Endothelial cell of umbilical vein (primary cell): ENCODE measurements at regions of chr5 and their contacts with region 1.

Region 1: DNA sequence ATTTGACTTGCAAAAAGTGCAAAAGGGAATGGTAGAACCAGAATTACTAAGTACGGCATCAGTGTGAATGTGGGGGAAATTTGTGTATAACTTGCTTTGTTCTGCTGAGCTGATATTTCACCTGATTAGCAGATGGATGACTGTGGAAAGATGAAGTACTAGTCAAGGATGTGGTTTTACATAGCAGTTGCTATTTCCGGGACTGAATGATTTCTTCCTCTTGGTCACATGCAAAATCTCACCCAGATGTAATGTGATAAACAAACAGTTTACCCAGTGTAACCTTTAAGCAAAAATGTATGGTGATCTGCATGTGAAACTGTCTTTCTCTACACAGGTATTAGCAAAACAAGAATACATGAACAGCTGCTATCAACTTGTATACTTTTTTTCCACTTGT is 46.1 kb downstream of the DCP2 start:
- DNase-seq: peak; percentile 59
- H3K4me3 ChIP-seq: no peak overlapping the region
- H3K27ac ChIP-seq: peak overlapping the region; percentile 95
- H3K4me1 ChIP-seq: peaks cover 48% of the 10 kb centered on the region
- H3K27me3 ChIP-seq: no peaks in the 10 kb centered on the region
- CTCF ChIP-seq: no peak
- POLR2A ChIP-seq: peak; percentile 56

Region 2: GRCh38 chr5:112976432-112977309 is 46.0 kb before region 1 on chr5 and contains the start of gene DCP2:
- CTCF ChIA-PET with region 1: no interaction called
- POLR2A ChIA-PET with region 1: no interaction called
- dilution Hi-C with region 1: no loop called
- intact Hi-C with region 1: loop called (anchors 1 kb)
- DNase-seq: peak; percentile 99
- H3K4me3 ChIP-seq: peak within 1 kb of the TSS; percentile 98 to 99 (median 99)
- H3K27ac ChIP-seq: peak within 1 kb of the TSS; percentile 48
- H3K4me1 ChIP-seq: peaks cover 21% of the 10 kb centered on the region
- H3K27me3 ChIP-seq: no peaks in the 10 kb centered on the region
- CTCF ChIP-seq: no peak
- POLR2A ChIP-seq: peak; percentile 97
- total RNA-seq, gene DCP2: 49.1 and 60.0 TPM in 2 replicates

Region 3: DNA sequence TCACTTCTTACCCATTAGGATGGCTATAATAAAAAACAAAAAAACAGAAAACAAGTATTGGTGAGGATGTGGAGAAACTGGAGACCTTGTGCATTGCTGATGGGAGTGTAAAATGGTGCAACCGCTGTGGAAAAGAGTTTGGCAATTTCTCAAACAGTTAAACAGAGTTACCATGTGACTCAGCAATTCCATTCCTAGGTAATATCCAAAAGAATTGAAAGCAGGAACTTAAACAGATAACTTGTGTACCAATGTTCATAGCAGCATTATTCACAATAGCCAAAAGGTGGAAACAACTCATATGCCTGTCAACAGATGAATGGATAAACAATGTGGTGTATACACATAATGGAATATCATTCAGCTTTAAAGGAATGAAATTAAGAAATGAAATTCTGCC is 17.2 kb before region 1 on chr5:
- CTCF ChIA-PET with region 1: interaction called, 4 read pairs
- POLR2A ChIA-PET with region 1: no interaction called
- dilution Hi-C with region 1: no loop called
- intact Hi-C with region 1: loop called (anchors 2 kb)
- DNase-seq: no peak
- H3K4me3 ChIP-seq: no peak overlapping the region
- H3K27ac ChIP-seq: no peak overlapping the region
- H3K4me1 ChIP-seq: peaks cover 4% of the 10 kb centered on the region
- H3K27me3 ChIP-seq: no peaks in the 10 kb centered on the region
- CTCF ChIP-seq: no peak
- POLR2A ChIP-seq: no peak

Region 4: DNA sequence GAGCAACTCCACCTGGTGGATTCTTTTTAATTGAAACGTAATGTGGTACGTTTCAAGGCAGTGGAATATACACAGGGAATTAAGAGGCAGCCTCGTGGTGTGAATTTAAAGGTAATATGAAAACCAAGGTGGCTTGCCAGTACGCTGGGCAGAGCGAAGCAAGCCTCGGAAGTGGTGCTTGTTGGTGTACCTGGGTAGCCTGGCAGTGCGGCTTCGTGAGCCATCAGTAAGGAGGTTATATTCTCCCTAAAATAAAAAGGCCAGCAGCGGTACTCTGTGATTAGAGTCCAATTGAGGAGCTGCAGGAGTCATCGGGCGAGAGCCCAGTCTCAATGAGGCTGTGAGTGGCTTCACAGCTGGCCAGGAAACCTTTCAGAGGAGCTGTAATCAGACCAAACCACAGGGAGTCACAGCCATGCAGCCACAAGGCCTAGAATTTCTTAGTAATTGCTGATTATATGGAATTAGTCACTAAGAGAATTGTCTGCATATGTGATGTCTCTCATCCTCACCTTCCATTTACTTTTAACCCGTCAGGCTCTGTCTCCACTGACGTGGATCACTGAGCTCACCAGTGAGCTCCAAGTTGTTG is 11.6 kb after region 1 on chr5:
- CTCF ChIA-PET with region 1: interaction called, 5 read pairs
- POLR2A ChIA-PET with region 1: no interaction called
- dilution Hi-C with region 1: no loop called
- intact Hi-C with region 1: loop called (anchors 1 kb)
- DNase-seq: no peak
- H3K4me3 ChIP-seq: no peak overlapping the region
- H3K27ac ChIP-seq: no peak overlapping the region
- H3K4me1 ChIP-seq: no peaks in the 10 kb centered on the region
- H3K27me3 ChIP-seq: no peaks in the 10 kb centered on the region
- CTCF ChIP-seq: no peak
- POLR2A ChIP-seq: no peak

Region 5: GRCh38 chr5:113050721-113051382 is 28.2 kb after region 1 on chr5:
- CTCF ChIA-PET with region 1: no interaction called
- POLR2A ChIA-PET with region 1: no interaction called
- dilution Hi-C with region 1: no loop called
- intact Hi-C with region 1: loop called (anchors 1 kb)
- DNase-seq: peak; percentile 83
- H3K4me3 ChIP-seq: no peak overlapping the region
- H3K27ac ChIP-seq: peak overlapping the region; percentile 73
- H3K4me1 ChIP-seq: peaks cover 27% of the 10 kb centered on the region
- H3K27me3 ChIP-seq: no peaks in the 10 kb centered on the region
- CTCF ChIP-seq: no peak
- POLR2A ChIP-seq: no peak

Region 6: GRCh38 chr5:113099822-113100221 is 77.2 kb after region 1 on chr5:
- CTCF ChIA-PET with region 1: no interaction called
- POLR2A ChIA-PET with region 1: no interaction called
- dilution Hi-C with region 1: no loop called
- intact Hi-C with region 1: no loop called
- DNase-seq: no peak
- H3K4me3 ChIP-seq: no peak overlapping the region
- H3K27ac ChIP-seq: no peak overlapping the region
- H3K4me1 ChIP-seq: no peaks in the 10 kb centered on the region
- H3K27me3 ChIP-seq: no peaks in the 10 kb centered on the region
- CTCF ChIP-seq: no peak
- POLR2A ChIP-seq: no peak